ENCODE measurements at regions of chr7 and their contacts with region 1.

Region 1: GRCh38 chr7:104267701-104268368 is 60.0 kb upstream of the ORC5 start:
- DNase-seq: peak; percentile 27
- H3K4me3 Mint-ChIP-seq: no peak overlapping the region
- H3K27ac Mint-ChIP-seq: no peak overlapping the region
- H3K4me1 Mint-ChIP-seq: no peaks in the 10 kb centered on the region
- H3K27me3 Mint-ChIP-seq: peaks cover 31% of the 10 kb centered on the region
- CTCF ChIP-seq: peak; percentile 34

Region 2: DNA sequence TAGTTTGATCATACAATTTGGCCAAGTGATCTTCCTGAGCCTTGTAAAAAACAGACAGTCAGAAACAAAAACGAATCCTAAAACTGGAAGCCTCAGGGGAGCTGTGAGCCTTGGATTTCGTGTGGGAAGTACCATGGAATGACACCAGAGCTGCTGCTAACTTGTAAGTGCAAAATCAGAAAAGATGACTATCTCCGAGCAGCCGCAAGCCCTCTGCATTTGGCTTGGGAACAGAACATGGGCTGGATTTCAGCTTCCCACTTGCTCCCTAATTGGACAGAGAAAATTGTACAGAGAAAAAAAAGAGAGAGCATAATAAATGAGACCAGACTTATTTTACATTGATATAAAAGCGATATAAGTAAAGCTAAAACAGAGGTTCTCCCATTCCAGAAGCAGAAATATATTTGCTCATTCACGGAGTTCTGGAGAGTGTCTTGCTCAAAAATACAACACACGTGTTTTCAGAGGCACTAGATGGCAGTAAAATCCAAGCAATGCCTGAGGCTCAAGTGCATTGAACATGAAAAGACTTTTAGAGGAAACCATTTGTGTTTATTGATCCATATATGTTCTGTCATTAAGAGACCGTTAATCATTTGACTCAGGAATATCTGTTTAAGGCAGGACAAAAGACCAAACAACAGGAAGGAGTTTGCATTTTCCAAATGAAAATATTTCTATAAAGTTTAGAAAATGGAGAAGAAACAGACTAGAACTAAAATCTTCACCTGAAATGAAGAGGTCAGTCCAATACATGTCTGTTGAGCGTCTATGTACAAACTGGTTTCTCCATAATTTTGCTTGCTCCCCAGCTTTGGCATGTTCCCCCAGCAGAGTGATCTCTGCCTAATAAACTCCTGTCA is 743.6 kb before region 1 on chr7:
- CTCF ChIA-PET with region 1: interaction called, 3 read pairs
- POLR2A ChIA-PET with region 1: no interaction called
- intact Hi-C with region 1: loop called (anchors 1 kb)
- DNase-seq: peak; percentile 30
- H3K4me3 Mint-ChIP-seq: no peak overlapping the region
- H3K27ac Mint-ChIP-seq: no peak overlapping the region
- H3K4me1 Mint-ChIP-seq: peaks cover 4% of the 10 kb centered on the region
- H3K27me3 Mint-ChIP-seq: peaks cover 47% of the 10 kb centered on the region
- CTCF ChIP-seq: peak; percentile 30

Region 3: GRCh38 chr7:104252404-104253134 is 15.3 kb before region 1 on chr7:
- CTCF ChIA-PET with region 1: interaction called, 19 read pairs
- POLR2A ChIA-PET with region 1: no interaction called
- intact Hi-C with region 1: no loop called
- DNase-seq: peak; percentile 21
- H3K4me3 Mint-ChIP-seq: no peak overlapping the region
- H3K27ac Mint-ChIP-seq: no peak overlapping the region
- H3K4me1 Mint-ChIP-seq: no peaks in the 10 kb centered on the region
- H3K27me3 Mint-ChIP-seq: peaks cover 56% of the 10 kb centered on the region
- CTCF ChIP-seq: no peak